ENCODE measurements at regions of chr19 and their contacts with region 1.

Region 1: DNA sequence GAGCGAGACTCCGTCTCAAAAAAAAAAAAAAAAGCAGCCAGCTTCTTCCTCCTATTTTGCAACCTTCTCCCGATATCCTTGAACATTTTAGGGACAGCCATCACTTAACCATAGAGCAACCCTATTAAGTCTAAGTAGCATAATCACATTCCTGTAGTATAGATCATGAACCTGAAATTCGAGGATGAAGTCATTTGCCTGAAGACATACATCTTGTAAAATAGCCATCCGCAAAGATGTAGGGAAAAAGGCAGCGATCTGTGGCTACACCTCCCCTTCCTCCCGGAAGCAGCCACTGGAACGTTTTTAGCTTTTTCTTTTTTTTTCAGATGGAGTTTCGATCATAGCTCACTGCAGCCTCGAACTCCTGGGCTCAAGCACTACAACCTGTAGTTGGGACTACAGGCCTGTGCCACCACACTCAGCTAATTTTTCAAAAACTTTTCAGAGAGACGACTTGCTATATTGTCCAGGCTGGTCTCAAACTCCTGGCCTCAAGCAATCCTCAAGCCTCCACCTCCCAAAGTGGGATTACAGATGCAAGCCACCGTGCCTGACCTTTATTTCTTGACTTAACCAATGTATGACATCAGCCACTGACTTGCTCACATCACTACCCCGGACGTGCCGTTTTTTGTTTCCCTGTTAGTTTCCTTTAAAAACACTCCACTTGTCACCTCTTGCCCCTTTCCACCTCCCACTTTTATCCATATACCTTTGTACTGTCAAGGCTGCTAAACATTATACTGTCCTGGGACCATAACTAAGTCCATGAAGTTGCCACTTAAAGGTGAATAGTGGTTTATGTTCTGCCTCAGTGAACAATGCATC is 2.0 kb upstream of the EPHX3 start:
- DNase-seq: no peak
- ATAC-seq: no peak
- H3K4me3 ChIP-seq: no peak overlapping the region
- H3K4me3 Mint-ChIP-seq: peak overlapping the region in 6 of 10 donors; percentile 22 to 80 (median 68)
- H3K27ac ChIP-seq: no peak overlapping the region
- H3K27ac Mint-ChIP-seq: no peak overlapping the region
- H3K4me1 ChIP-seq: peaks cover 0 to 5% of the 10 kb centered on the region in 2 donors
- H3K4me1 Mint-ChIP-seq: peaks cover 6 to 21% (median 16%) of the 10 kb centered on the region in 7 donors
- H3K27me3 ChIP-seq: peaks cover 0 to 5% of the 10 kb centered on the region in 2 donors
- H3K27me3 Mint-ChIP-seq: peaks cover 18 to 40% (median 25%) of the 10 kb centered on the region in 5 donors

Region 2: GRCh38 chr19:15222738-15223648 is 11.3 kb before region 1 on chr19:
- CTCF ChIA-PET with region 1: no interaction called
- POLR2A ChIA-PET with region 1: no interaction called
- intact Hi-C with region 1: loop called in 1 of 2 experiments (anchors 1 kb)
- DNase-seq: peak; percentile 53 to 80 (median 66)
- ATAC-seq: peak; percentile 98
- H3K4me3 ChIP-seq: peak overlapping the region; percentile 48
- H3K4me3 Mint-ChIP-seq: peak overlapping the region; percentile 67 to 84 (median 81)
- H3K27ac ChIP-seq: peak overlapping the region; percentile 8
- H3K27ac Mint-ChIP-seq: peak overlapping the region in 6 of 9 donors; percentile 13 to 67 (median 24)
- H3K4me1 ChIP-seq: peaks cover 0 to 14% of the 10 kb centered on the region in 2 donors
- H3K4me1 Mint-ChIP-seq: peaks cover 10 to 22% (median 15%) of the 10 kb centered on the region in 7 donors
- H3K27me3 ChIP-seq: peaks cover 3 to 11% of the 10 kb centered on the region in 2 donors
- H3K27me3 Mint-ChIP-seq: peaks cover 12 to 37% (median 24%) of the 10 kb centered on the region in 5 donors